CD8-positive, alpha-beta T cell (primary cell): ENCODE measurements at regions of chr6 and their contacts with region 1.

Region 1: DNA sequence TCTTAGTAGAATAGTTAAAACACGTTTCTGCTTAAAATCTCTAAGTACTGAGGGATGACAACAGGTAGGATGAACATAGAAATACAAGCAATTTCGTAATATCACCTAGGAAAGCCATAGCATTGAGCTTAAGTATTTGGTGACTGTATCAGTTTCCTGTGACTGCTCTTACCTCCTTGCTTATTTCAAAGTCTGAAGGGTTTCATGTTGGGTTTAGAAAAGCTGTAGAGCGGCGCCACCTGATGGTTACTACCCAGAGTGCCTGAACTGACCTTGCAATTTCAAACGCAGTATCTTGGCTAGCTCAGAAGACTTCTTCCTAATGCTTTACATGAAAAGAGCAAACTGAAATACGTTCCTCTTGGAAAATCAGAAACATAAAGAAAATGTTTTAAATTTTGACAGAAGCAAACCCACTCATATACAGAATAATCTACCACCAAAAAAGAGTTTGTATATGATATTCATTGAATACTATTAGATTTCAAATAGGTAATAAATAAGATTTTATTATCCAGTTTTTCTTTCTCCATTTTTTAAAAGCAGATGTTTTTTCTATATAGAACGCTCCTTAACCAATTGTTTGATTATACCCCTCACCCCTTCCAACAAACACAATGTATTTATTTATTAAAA is 82.3 kb upstream of the RIPOR2 start:
- DNase-seq: peak; percentile 65 to 90 (median 84)
- ATAC-seq: peak; percentile 87
- H3K4me3 ChIP-seq: no peak overlapping the region
- H3K4me3 Mint-ChIP-seq: no peak overlapping the region
- H3K27ac ChIP-seq: peak overlapping the region in 1 of 2 experiments; percentile 59
- H3K27ac Mint-ChIP-seq: peak overlapping the region; percentile 87
- H3K4me1 ChIP-seq: peaks cover 31% of the 10 kb centered on the region
- H3K4me1 Mint-ChIP-seq: peaks cover 38% of the 10 kb centered on the region
- H3K27me3 ChIP-seq: no peaks in the 10 kb centered on the region
- H3K27me3 Mint-ChIP-seq: no peaks in the 10 kb centered on the region
- CTCF ChIP-seq: peak; percentile 89

Region 2: DNA sequence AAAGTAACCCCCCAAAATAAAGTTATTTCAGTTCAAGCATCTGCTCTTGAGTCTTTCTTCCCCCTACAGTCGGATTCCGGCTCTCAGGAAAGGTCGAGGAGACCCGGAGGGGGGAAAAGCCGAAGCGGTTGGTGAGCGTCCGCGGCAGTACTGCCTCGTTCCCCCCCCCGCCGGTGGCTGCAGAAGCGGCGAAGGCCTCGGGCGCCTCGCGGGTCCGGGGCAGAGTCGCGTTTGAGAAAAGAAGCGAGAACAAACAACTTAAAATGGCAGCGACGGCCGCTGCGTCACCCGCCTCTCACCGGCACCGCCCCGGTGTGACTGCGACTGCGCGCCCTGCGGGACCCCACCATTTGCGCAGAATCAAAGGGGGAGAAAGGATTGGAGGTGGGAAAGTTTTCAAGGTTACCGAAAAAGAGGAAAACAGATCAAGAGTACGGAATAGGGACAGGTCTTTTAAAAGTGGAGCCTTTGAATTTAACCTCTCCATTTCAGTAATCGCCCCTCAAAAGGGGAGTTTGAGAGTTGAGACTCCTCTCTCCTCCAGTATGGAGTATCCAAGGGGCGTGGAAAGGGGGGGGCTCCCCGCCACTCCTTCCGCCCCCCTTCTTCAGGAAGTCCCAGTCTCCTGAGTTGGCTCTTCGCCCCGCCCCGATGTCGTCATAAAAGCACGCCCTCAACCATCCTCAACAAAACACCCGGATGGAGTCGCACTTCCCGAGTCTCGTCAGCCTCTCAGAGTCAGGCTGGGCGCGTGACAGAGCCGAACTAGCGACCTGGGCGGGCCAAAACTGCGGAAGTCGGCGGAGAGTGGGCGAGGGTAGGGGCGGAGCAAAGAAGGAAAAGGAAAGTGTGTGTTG is 297.2 kb before region 1 on chr6:
- CTCF ChIA-PET with region 1: no interaction called
- POLR2A ChIA-PET with region 1: no interaction called
- intact Hi-C with region 1: loop called (anchors 2 to 5 kb)
- DNase-seq: peak; percentile 100
- ATAC-seq: peak; percentile 80
- H3K4me3 ChIP-seq: peak overlapping the region; percentile 88 to 99
- H3K4me3 Mint-ChIP-seq: peak overlapping the region; percentile 92
- H3K27ac ChIP-seq: peak overlapping the region; percentile 97 to 100
- H3K27ac Mint-ChIP-seq: peak overlapping the region; percentile 98
- H3K4me1 ChIP-seq: peaks cover 37% of the 10 kb centered on the region
- H3K4me1 Mint-ChIP-seq: peaks cover 41% of the 10 kb centered on the region
- H3K27me3 ChIP-seq: no peaks in the 10 kb centered on the region
- H3K27me3 Mint-ChIP-seq: no peaks in the 10 kb centered on the region
- CTCF ChIP-seq: no peak

Region 3: GRCh38 chr6:24848461-24848860 is 169.6 kb before region 1 on chr6:
- CTCF ChIA-PET with region 1: interaction called, 18 read pairs
- POLR2A ChIA-PET with region 1: no interaction called
- intact Hi-C with region 1: no loop called
- DNase-seq: no peak
- ATAC-seq: no peak
- H3K4me3 ChIP-seq: no peak overlapping the region
- H3K4me3 Mint-ChIP-seq: no peak overlapping the region
- H3K27ac ChIP-seq: no peak overlapping the region
- H3K27ac Mint-ChIP-seq: peak overlapping the region; percentile 87
- H3K4me1 ChIP-seq: peaks cover 12% of the 10 kb centered on the region
- H3K4me1 Mint-ChIP-seq: peaks cover 49% of the 10 kb centered on the region
- H3K27me3 ChIP-seq: no peaks in the 10 kb centered on the region
- H3K27me3 Mint-ChIP-seq: no peaks in the 10 kb centered on the region
- CTCF ChIP-seq: no peak

Region 4: DNA sequence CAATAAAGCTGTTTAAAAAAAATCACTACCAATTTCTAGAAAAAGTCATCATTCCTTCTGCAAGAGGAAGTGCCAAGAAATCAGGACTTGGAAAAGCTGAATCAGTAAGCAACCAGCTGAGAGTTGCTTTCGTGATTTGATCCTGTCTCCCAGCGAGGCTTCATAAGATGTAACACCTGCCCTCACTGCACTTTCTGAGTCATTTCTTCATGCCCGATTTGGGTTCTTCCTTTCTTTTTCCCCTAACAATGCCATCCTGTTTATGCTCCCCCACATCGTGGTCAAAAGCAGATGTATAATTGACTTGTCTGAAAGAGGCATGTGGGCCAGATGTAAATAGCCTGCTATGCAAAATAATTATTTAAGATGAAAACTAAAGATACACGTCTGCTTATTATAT is 134.4 kb before region 1 on chr6:
- CTCF ChIA-PET with region 1: interaction called, 15 read pairs
- POLR2A ChIA-PET with region 1: interaction called, 3 read pairs
- intact Hi-C with region 1: no loop called
- DNase-seq: peak in 2 of 9 experiments; percentile 33 to 48
- ATAC-seq: peak; percentile 60
- H3K4me3 ChIP-seq: no peak overlapping the region
- H3K4me3 Mint-ChIP-seq: peak overlapping the region; percentile 67
- H3K27ac ChIP-seq: peak overlapping the region in 1 of 2 experiments; percentile 52
- H3K27ac Mint-ChIP-seq: peak overlapping the region; percentile 94
- H3K4me1 ChIP-seq: peaks cover 84% of the 10 kb centered on the region
- H3K4me1 Mint-ChIP-seq: peaks cover 87% of the 10 kb centered on the region
- H3K27me3 ChIP-seq: no peaks in the 10 kb centered on the region
- H3K27me3 Mint-ChIP-seq: no peaks in the 10 kb centered on the region
- CTCF ChIP-seq: no peak

Region 5: DNA sequence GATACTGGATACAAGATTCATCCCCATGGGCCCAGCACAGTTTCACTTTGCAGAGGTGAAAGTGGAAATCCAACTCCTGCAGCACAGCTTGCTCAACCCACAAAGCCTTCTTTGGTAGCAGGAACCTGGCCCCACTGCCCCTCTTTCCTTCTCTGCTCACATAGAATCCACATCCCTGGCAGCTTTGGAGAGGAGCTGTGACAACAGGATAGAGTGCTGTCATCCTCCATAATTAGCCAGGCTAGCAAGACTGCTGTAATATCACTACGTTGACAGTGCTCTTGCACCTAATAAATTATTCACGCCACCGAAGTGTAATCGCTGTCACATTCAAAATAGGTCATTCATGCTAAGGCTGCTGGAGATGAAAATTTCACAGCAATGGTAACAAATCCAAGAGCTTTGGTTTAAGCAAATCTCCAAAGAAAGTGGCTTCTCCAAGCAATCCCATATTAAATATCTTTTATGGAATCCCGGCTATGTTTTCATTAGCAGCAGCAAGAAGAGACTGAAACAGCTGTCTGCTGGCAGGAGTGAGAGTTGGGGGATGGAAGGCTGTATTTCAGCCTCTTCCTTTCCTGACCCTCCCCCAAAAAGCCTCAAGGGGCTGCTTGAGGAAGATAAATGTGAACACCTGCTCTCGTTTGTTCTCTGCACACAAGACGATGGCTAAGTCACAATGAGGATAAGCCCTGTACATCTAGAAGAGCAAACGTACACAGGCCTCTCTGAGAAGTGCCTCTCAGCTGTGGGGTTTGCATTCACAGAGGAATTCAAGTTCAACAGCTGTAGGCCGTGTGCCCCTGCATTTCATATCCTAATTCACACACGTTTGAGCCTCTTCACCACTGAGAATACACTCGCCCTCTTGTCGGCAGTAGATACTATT is 98.8 kb before region 1 on chr6:
- CTCF ChIA-PET with region 1: interaction called, 16 read pairs
- POLR2A ChIA-PET with region 1: no interaction called
- intact Hi-C with region 1: no loop called
- DNase-seq: peak in 1 of 9 experiments; percentile 53
- ATAC-seq: peak; percentile 36
- H3K4me3 ChIP-seq: peak overlapping the region; percentile 2 to 29
- H3K4me3 Mint-ChIP-seq: peak overlapping the region; percentile 69
- H3K27ac ChIP-seq: peak overlapping the region; percentile 2 to 51
- H3K27ac Mint-ChIP-seq: peak overlapping the region; percentile 92
- H3K4me1 ChIP-seq: peaks cover 94% of the 10 kb centered on the region
- H3K4me1 Mint-ChIP-seq: peaks cover 92% of the 10 kb centered on the region
- H3K27me3 ChIP-seq: no peaks in the 10 kb centered on the region
- H3K27me3 Mint-ChIP-seq: no peaks in the 10 kb centered on the region
- CTCF ChIP-seq: no peak

Region 6: GRCh38 chr6:25006565-25007001 is 11.5 kb before region 1 on chr6:
- CTCF ChIA-PET with region 1: interaction called, 35 read pairs
- POLR2A ChIA-PET with region 1: interaction called, 5 read pairs
- intact Hi-C with region 1: no loop called
- DNase-seq: peak in 5 of 9 experiments; percentile 29 to 66 (median 43)
- ATAC-seq: peak; percentile 63
- H3K4me3 ChIP-seq: peak overlapping the region in 1 of 2 experiments; percentile 3
- H3K4me3 Mint-ChIP-seq: peak overlapping the region; percentile 20
- H3K27ac ChIP-seq: peak overlapping the region; percentile 29 to 85
- H3K27ac Mint-ChIP-seq: peak overlapping the region; percentile 84
- H3K4me1 ChIP-seq: peaks cover 64% of the 10 kb centered on the region
- H3K4me1 Mint-ChIP-seq: peaks cover 78% of the 10 kb centered on the region
- H3K27me3 ChIP-seq: no peaks in the 10 kb centered on the region
- H3K27me3 Mint-ChIP-seq: no peaks in the 10 kb centered on the region
- CTCF ChIP-seq: no peak

Region 7: DNA sequence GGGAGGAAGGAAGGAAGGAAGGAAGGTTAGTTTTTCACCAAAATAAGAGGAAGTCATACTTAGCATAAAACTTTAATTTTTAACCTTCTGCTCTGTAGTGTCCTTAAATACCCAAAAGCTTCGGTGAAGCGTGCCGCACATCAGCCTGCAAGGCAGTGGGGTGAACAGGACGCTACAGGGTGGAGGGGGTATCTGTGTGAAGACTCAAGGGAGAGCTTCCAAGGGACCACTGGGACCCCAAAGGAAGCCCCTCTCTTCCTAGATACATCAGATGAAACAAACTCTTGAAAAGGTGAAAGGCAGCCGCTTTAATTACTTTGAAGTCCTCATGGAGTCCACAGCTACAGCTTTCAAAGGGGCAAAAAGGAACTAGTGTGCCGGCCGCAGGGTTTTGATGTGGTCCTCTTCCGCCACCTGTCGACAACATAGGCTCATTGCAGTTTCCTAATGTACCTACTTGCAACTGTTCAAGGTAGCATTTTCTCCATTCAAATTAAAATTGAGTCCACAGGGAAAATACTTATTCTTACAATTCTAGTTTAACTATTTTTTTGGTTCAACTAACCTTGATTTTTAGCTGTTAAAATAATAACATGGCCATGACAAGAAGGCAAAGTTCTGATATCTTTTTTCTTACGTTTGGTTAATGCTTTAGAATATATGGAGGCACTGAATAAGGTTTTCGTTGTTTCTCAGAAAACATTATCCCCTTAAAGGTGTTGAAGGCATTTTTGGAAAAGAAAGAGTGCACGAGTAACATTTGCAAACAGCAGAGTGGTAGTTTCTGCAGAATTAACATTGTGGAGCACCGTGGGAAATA is 52.7 kb after region 1 on chr6:
- CTCF ChIA-PET with region 1: interaction called, 137 read pairs
- POLR2A ChIA-PET with region 1: interaction called, 6 read pairs
- intact Hi-C with region 1: loop called in 1 of 2 experiments (anchors 2 kb)
- DNase-seq: peak; percentile 62 to 92 (median 81)
- ATAC-seq: peak; percentile 98
- H3K4me3 ChIP-seq: peak overlapping the region in 1 of 2 experiments; percentile 12
- H3K4me3 Mint-ChIP-seq: peak overlapping the region; percentile 73
- H3K27ac ChIP-seq: peak overlapping the region in 1 of 2 experiments; percentile 31
- H3K27ac Mint-ChIP-seq: peak overlapping the region; percentile 87
- H3K4me1 ChIP-seq: no peaks in the 10 kb centered on the region
- H3K4me1 Mint-ChIP-seq: peaks cover 9% of the 10 kb centered on the region
- H3K27me3 ChIP-seq: no peaks in the 10 kb centered on the region
- H3K27me3 Mint-ChIP-seq: no peaks in the 10 kb centered on the region
- CTCF ChIP-seq: peak; percentile 92